Posterior vena cava (tissue), 2 donors: ENCODE measurements at regions of chr19 and their contacts with region 1.

Region 1: GRCh38 chr19:54168174-54168917 is 4.6 kb downstream of the TMC4 start:
- DNase-seq: peak; percentile 99

Region 2: GRCh38 chr19:54207977-54208783 is 39.8 kb after region 1 on chr19:
- intact Hi-C with region 1: loop called in 1 of 2 experiments (anchors 2 kb)
- DNase-seq: peak; percentile 89

Region 3: GRCh38 chr19:54231077-54231931 is 63.0 kb after region 1 on chr19:
- intact Hi-C with region 1: loop called (anchors 2 to 5 kb)
- DNase-seq: peak; percentile 97